ENCODE measurements at regions of chr1 and their contacts with region 1.

Region 1: DNA sequence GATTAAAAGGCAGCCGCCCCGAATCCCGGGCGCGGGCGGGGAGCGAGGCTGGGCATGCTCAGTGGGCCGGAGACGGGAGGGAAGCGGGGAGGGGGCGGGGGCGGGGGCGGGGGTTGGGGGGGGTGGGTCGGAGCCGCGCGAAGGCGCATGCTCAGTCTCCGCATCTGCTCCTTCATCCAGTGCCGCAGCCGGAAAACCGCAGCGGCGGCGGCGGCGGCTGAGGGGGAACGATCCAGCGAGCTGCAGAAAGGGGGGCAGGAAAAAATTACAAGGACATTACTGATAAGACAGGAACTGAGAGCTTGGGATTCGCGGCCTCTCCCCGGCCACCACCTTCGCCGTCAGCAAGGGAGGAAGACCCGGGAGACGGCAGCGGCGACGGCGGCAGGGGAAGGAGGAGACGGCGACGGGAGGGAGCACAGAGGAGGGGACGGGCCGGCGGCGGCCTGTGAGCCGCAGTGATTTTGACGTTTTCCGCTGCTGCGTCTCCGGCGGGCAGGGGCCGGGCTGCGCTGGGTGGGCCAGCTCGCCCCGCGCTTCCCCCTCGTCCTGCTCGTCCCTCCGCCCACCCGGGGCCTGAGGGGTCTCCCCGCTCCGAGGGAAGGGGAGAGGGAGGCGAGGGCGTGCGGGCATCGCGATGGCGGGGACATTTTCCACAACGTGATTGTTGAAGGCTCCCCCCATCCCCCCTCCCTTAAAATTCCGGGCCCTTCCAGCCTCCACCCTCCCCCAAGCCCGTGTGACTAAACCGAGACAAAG is at the start of gene CAMSAP2:
- DNase-seq: peak; percentile 95

Region 2: DNA sequence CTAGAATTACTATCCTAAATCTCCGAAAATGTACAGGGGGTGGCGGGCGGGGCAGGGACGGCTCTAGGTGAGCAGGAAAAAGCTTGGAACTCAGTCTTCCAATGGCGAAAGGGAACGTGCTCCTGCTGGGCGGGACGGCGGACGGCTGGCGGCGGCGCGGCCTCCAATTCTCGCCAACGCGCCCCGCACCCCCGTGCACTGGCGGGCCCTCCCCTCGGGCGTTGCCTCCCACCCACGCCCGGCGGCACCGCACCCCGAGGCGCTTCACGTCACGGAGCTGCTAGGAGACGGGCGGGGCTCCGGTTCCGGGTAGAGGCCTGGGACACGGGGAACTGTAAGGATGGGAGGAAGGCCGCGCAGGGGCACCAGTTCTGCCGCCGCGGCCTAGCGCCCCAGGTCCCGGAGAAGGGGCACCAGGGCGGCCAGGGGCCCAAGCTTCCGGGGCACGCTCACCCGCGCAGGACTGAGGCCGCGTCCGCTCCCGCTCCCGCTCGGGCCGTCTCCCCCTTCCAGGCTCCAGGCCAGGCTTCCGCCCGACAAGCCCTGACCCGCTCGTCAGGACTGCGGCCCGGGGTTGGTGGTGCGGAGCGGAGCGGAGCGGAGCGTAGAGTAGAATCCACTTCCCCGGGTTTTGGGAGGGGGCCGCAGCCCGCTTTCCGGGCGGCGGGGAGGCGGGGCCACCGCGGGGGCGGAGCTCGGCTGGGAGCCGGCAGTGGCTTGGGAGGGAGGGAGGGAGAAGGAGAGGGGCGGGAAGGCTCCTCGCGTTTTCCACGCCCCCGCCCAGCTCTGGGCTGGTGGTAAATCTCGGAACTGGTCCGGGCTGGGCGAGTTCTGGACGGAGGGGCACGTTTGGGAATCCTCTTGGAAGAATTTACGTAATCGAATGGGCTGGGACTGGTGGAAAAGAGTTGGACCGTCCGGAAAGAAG is 69.3 kb before region 1 on chr1 and contains the start of gene DDX59:
- CTCF ChIA-PET with region 1: no interaction called
- POLR2A ChIA-PET with region 1: interaction called, 26 read pairs
- DNase-seq: peak; percentile 97